ENCODE measurements at regions of chr3 and their contacts with region 1.

Region 1: GRCh38 chr3:194682694-194683310 is 2.9 kb upstream of the FAM43A start:
- DNase-seq: peak; percentile 83
- H3K4me3 ChIP-seq: no peak overlapping the region
- H3K27ac ChIP-seq: peak overlapping the region; percentile 21 to 69 (median 62)
- H3K4me1 ChIP-seq: peaks cover 0 to 31% (median 25%) of the 10 kb centered on the region in 4 donors
- H3K27me3 ChIP-seq: no peaks in the 10 kb centered on the region
- CTCF ChIP-seq: peak; percentile 75 to 95 (median 82)
- EP300 ChIP-seq: no peak
- POLR2A ChIP-seq: no peak

Region 2: DNA sequence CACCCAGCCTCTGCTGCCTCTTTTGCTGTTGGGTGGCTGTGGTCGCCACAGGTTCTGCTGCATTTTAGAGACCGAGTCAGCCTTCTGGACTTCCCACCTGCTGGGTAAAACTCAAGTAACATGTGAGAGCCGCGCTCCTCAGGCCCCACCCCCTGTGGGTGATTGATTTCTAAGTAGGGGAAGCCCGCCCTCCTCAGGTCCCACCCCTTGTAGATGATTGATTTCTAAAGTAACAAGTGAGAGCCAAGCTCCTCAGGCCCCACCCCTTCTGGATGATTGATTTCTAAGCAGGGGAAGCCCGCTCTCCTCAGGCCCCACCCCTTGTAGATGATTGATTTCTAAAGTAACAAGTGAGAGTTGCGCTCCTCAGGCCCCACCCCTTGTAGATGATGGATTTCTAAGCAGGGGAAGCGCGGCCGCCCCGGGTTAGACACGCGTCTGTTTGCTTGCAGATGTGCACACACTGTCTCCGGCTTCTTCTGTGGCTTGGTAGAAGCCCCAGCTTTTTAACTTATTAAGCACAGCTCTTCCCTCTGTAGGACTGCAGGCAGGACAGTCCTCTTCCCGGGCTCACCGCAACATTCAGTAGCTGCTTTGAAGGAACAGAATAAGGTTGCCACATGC is 86.3 kb after region 1 on chr3:
- intact Hi-C with region 1: loop called (anchors 2 kb)
- DNase-seq: peak; percentile 98
- H3K4me3 ChIP-seq: peak overlapping the region in 3 of 4 donors; percentile 33 to 43 (median 41)
- H3K27ac ChIP-seq: peak overlapping the region; percentile 47 to 60 (median 50)
- H3K4me1 ChIP-seq: peaks cover 0 to 14% (median 10%) of the 10 kb centered on the region in 4 donors
- H3K27me3 ChIP-seq: no peaks in the 10 kb centered on the region
- CTCF ChIP-seq: no peak
- EP300 ChIP-seq: no peak
- POLR2A ChIP-seq: no peak

Region 3: GRCh38 chr3:194985031-194985578 is 302.3 kb after region 1 on chr3:
- intact Hi-C with region 1: loop called (anchors 10 kb)
- DNase-seq: peak; percentile 89
- H3K4me3 ChIP-seq: peak overlapping the region in 3 of 4 donors; percentile 29 to 30 (median 29)
- H3K27ac ChIP-seq: no peak overlapping the region
- H3K4me1 ChIP-seq: peaks cover 0 to 12% (median 7%) of the 10 kb centered on the region in 4 donors
- H3K27me3 ChIP-seq: no peaks in the 10 kb centered on the region
- CTCF ChIP-seq: peak in 2 of 4 experiments; percentile 12
- EP300 ChIP-seq: no peak
- POLR2A ChIP-seq: no peak

Region 4: DNA sequence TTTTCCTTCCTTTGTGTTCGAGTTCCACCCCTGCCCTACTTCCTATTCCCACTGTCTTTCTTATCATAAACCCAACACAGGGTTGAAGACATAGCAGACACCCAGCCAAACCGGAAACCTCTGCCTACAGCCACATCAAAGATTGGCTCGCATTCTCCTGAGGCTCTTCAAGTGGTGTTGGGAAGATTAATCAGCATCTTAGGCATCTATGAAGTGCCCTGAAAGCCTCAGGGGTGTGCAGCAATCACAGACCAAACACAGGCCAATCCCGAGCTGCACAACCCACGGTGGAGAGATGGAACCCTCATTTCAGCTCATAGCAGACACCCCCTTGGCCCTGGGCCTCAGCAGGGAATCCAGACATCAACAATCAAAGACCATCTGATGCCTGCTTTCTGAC is 332.2 kb after region 1 on chr3:
- intact Hi-C with region 1: no loop called
- DNase-seq: peak; percentile 21
- H3K4me3 ChIP-seq: no peak overlapping the region
- H3K27ac ChIP-seq: no peak overlapping the region
- H3K4me1 ChIP-seq: no peaks in the 10 kb centered on the region
- H3K27me3 ChIP-seq: no peaks in the 10 kb centered on the region
- CTCF ChIP-seq: no peak
- EP300 ChIP-seq: no peak
- POLR2A ChIP-seq: no peak

Region 5: DNA sequence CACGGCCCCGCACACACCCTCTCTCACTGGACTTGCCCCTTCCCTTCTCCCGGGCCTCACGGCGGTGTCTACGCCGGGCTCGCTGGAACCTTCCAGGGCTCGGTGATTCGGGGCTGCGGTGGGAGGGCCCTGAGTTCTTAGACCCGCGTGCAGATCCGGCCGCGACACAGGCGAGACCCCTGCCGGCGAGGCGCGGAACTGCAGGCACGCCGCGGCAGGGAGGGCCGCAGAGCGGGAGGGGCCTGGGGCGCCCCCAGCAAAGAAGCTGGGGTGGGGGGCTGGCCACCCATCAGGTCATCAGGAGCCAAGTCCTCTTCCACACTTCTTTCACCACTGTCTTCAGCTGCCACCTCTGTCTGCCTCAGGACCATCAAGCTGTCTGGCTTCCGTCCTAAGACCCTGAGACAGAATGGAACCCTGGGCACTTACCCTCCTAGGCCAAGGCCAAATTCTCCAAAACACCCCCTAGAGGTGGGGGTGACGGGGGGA is 423.7 kb after region 1 on chr3:
- intact Hi-C with region 1: loop called (anchors 1 kb)
- DNase-seq: peak; percentile 86
- H3K4me3 ChIP-seq: peak overlapping the region in 1 of 4 donors; percentile 25
- H3K27ac ChIP-seq: peak overlapping the region in 2 of 4 donors; percentile 31 to 39
- H3K4me1 ChIP-seq: peaks cover 0 to 30% (median 18%) of the 10 kb centered on the region in 4 donors
- H3K27me3 ChIP-seq: no peaks in the 10 kb centered on the region
- CTCF ChIP-seq: peak; percentile 97 to 100 (median 99)
- EP300 ChIP-seq: no peak
- POLR2A ChIP-seq: no peak

Region 6: DNA sequence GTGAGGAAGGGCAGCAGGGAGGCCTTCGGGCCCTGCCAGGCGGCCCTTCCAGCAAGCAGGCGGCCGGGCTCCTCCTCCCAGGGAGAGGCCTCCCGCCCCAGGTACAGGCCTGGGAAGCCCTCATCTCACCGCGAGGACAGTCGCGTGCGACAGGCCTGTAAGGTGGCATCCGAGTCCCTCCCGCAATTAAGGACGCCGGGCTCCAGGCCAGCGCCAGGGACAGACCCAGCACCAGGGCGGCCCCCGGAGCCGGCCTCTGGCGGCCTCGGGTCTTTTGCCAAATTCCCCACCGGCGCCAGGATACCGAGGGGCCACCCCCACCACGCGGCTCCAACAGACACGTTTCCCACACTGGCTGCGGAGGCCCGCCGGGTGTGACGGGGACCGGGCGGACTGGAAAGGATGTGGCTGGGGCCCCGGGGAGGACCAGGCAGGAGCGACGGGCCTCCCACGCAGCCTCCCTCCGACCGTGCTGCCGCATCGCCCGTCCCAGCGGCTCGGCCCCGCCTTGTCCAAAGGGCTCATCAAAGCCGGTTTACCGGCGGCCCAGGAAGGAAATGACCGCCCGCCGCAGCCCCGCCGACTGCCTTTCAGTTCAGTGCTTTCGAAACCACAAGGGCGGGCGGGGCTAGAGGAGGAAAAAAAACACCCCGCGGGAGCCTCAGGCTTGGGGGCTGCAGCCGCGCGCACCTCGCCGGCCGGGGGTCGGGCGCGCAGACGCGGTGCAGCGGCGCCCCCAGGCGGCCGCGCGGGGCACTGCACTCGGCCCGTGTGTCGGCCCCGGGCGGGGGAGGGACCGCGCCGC is 576.9 kb after region 1 on chr3:
- intact Hi-C with region 1: loop called (anchors 1 kb)
- DNase-seq: peak; percentile 98
- H3K4me3 ChIP-seq: peak overlapping the region; percentile 61 to 75 (median 68)
- H3K27ac ChIP-seq: peak overlapping the region; percentile 87 to 97 (median 94)
- H3K4me1 ChIP-seq: peaks cover 0 to 39% (median 37%) of the 10 kb centered on the region in 4 donors
- H3K27me3 ChIP-seq: no peaks in the 10 kb centered on the region
- CTCF ChIP-seq: peak in 1 of 4 experiments; percentile 63
- EP300 ChIP-seq: no peak
- POLR2A ChIP-seq: peak; percentile 65 to 66

Region 7: GRCh38 chr3:195442573-195443390 is 760.0 kb after region 1 on chr3 and contains the start of gene ACAP2:
- intact Hi-C with region 1: loop called (anchors 5 kb)
- DNase-seq: peak; percentile 100
- H3K4me3 ChIP-seq: peak within 1 kb of the TSS; percentile 83 to 100 (median 90)
- H3K27ac ChIP-seq: peak within 1 kb of the TSS; percentile 91 to 99 (median 96)
- H3K4me1 ChIP-seq: peaks cover 0 to 34% (median 19%) of the 10 kb centered on the region in 4 donors
- H3K27me3 ChIP-seq: no peaks in the 10 kb centered on the region
- CTCF ChIP-seq: no peak
- EP300 ChIP-seq: no peak
- POLR2A ChIP-seq: peak; percentile 69 to 84
- total RNA-seq, gene ACAP2: 28.0 to 57.1 (median 44.4) TPM

Measured in sigmoid colon (tissue), 7 donors.